Activated CD4-positive, alpha-beta T cell treated with anti-CD3 and anti-CD28 coated beads for 36 hours (primary cell): ENCODE measurements at regions of chr12 and their contacts with region 1.

Region 1: GRCh38 chr12:14365294-14366208 is at the start of gene ATF7IP:
- DNase-seq: peak; percentile 97
- ATAC-seq: peak; percentile 85
- H3K4me3 Mint-ChIP-seq: peak within 1 kb of the TSS; percentile 76
- H3K27ac Mint-ChIP-seq: peak within 1 kb of the TSS; percentile 98
- H3K4me1 Mint-ChIP-seq: peaks cover 33% of the 10 kb centered on the region
- H3K27me3 Mint-ChIP-seq: no peaks in the 10 kb centered on the region
- total RNA-seq, gene ATF7IP: 81.3 to 101 TPM

Region 2: DNA sequence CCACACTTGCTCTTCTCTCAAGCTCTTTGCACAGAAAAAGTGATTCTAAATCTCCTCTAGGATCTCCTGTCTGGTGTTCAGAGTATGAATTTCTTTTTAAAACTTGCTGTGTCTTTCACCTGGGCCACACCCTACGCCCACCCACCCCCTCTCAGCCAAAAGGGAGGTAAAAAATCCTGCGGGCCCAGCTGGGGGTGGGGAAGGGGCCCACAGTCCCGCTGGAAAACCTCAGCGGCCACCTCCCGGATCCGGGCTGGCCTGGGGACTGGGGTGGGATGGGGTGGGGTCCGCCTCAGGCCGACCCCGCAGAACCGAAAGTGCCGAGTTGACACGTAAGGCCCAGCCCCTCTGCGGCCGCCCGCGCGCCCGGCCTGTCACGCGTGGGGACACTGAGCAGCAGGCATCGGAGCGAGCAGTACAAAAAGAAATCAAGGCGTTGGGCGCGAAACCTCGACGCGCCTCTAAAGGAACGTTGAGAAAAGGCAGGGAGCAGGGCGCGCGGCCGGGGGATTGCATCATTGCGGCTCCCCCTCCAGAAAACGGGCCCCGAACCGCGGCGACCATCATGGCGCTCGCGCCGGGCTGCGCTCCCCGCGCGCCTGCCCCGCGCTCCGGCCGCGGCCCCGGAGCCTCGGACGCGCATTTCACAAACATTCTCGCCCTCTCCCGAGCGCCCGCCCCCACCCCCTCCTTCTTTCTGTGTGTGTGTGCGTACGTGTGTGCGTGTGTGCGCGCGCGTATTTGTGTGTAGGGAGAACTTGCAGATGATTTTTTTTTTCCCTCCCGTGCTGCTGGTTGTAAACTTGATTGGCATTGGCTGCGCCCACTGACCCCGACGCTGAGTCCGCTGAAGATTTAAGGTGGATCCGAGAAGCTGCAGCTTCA is 1640.6 kb before region 1 on chr12:
- CTCF ChIA-PET with region 1: no interaction called
- POLR2A ChIA-PET with region 1: no interaction called
- intact Hi-C with region 1: loop called in 1 of 2 experiments (anchors 1 kb)
- DNase-seq: peak; percentile 94
- ATAC-seq: peak; percentile 59
- H3K4me3 Mint-ChIP-seq: peak overlapping the region; percentile 93
- H3K27ac Mint-ChIP-seq: peak overlapping the region; percentile 98
- H3K4me1 Mint-ChIP-seq: peaks cover 45% of the 10 kb centered on the region
- H3K27me3 Mint-ChIP-seq: no peaks in the 10 kb centered on the region

Region 3: GRCh38 chr12:14239350-14239934 is 126.1 kb before region 1 on chr12:
- CTCF ChIA-PET with region 1: interaction called, 29 read pairs
- POLR2A ChIA-PET with region 1: interaction called, 7 read pairs
- intact Hi-C with region 1: loop called (anchors 1 kb)
- DNase-seq: peak; percentile 63
- ATAC-seq: peak; percentile 86
- H3K4me3 Mint-ChIP-seq: peak overlapping the region; percentile 62
- H3K27ac Mint-ChIP-seq: peak overlapping the region; percentile 89
- H3K4me1 Mint-ChIP-seq: peaks cover 20% of the 10 kb centered on the region
- H3K27me3 Mint-ChIP-seq: no peaks in the 10 kb centered on the region

Region 4: DNA sequence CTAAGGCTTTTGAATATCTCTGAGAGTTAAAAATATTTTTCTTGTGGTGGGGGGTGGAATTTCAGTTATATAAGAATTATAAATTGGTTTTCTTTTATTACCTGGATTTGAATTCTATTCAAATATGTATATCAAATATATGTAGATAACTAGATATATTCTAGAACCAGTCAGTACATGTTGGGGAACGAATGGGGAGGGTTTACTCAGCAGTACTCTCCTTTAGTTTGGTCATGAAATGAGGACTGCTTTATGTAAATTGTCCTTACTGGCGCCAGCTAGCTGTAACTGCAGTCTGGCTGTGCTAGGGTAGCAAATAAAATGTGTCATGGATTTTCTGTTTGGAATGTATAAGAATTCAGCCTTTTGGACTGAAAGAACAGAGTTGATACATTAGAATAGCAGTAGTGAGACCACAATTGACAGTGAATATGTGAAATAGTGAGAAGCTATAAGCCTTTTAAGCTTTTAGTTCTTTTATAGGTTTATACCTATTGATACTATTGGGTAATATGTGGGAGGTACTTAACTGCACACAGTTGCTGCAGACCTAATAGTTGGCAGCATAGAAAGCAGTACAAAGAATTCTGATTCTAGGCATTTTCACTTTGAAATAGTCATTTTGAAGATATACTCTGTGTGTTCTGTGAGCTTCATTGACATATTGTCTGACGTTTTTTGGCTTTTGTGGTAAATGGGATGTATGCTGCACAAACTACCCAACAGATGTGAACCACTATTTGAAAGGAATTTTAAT is 28.9 kb after region 1 on chr12:
- CTCF ChIA-PET with region 1: interaction called, 22 read pairs
- POLR2A ChIA-PET with region 1: interaction called, 27 read pairs
- intact Hi-C with region 1: loop called (anchors 1 kb)
- DNase-seq: peak; percentile 66
- ATAC-seq: peak; percentile 82
- H3K4me3 Mint-ChIP-seq: peak overlapping the region; percentile 71
- H3K27ac Mint-ChIP-seq: peak overlapping the region; percentile 96
- H3K4me1 Mint-ChIP-seq: peaks cover 78% of the 10 kb centered on the region
- H3K27me3 Mint-ChIP-seq: no peaks in the 10 kb centered on the region

Region 5: GRCh38 chr12:14454098-14454907 is 88.8 kb after region 1 on chr12:
- CTCF ChIA-PET with region 1: interaction called, 6 read pairs
- POLR2A ChIA-PET with region 1: interaction called, 3 read pairs
- intact Hi-C with region 1: loop called (anchors 1 to 2 kb)
- DNase-seq: peak; percentile 42
- ATAC-seq: peak; percentile 92
- H3K4me3 Mint-ChIP-seq: no peak overlapping the region
- H3K27ac Mint-ChIP-seq: peak overlapping the region; percentile 78
- H3K4me1 Mint-ChIP-seq: peaks cover 46% of the 10 kb centered on the region
- H3K27me3 Mint-ChIP-seq: no peaks in the 10 kb centered on the region

Region 6: GRCh38 chr12:14948672-14949071 is 583.1 kb after region 1 on chr12:
- CTCF ChIA-PET with region 1: no interaction called
- POLR2A ChIA-PET with region 1: no interaction called
- intact Hi-C with region 1: loop called in 1 of 2 experiments (anchors 2 kb)
- DNase-seq: peak; percentile 68
- ATAC-seq: peak; percentile 82
- H3K4me3 Mint-ChIP-seq: peak overlapping the region; percentile 73
- H3K27ac Mint-ChIP-seq: peak overlapping the region; percentile 96
- H3K4me1 Mint-ChIP-seq: peaks cover 87% of the 10 kb centered on the region
- H3K27me3 Mint-ChIP-seq: no peaks in the 10 kb centered on the region